ENCODE measurements at regions of chr18 and their contacts with region 1.

Region 1: DNA sequence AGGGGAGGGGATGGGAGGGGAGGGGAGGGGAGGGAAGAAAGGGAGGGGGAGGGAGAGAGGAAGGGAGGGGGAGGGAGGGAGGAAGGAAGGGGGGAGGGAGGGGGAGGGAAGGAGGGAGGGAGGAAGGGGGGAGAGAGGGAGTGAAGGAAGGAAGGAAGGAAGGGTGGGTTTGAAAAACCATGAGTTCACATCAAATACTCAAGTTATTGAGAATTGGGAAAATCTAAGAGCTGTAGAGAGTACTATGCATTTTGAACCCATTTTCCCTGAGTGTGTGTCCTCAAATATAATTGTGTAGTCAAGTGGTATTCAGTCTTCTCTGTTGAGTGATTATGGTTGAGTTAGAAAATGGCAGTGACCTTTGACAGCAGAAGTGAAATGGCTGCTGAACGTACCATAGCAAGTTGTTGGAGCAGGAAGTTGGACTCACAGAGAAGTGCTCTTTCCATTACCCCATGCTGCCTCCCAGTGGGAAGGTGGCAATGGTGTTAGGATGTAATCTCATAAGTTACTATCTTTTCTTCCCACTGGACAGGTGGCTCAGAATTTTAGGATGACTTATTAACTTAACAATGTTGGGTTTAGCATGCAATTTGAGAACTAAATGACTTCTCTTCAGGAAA is 214.6 kb downstream of the SETBP1 start:
- DNase-seq: peak; percentile 15
- H3K4me3 Mint-ChIP-seq: no peak overlapping the region
- H3K27ac Mint-ChIP-seq: peak overlapping the region; percentile 61
- H3K4me1 Mint-ChIP-seq: peaks cover 61% of the 10 kb centered on the region
- H3K27me3 Mint-ChIP-seq: peaks cover 4% of the 10 kb centered on the region

Region 2: DNA sequence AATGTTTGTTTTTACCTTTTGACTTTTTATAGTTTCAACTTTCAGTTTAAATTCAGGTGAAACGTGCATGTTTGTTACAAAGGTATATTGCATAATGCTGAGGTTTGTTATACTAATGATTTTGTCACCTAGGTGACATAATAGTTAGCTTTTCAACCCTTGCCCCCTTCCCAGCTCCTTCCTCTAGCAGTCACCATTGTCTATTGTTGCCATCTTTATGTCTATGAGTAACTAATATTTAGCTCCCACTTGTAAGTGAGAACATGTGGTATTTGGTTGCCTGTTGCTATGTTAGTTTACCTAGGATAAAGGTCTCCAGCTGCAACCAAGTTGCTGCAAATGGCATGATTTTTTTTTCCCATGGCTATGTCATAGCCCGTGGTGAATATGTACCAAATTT is 536.9 kb before region 1 on chr18:
- intact Hi-C with region 1: loop called (anchors 10 kb)
- DNase-seq: no peak
- H3K4me3 Mint-ChIP-seq: no peak overlapping the region
- H3K27ac Mint-ChIP-seq: no peak overlapping the region
- H3K4me1 Mint-ChIP-seq: no peaks in the 10 kb centered on the region
- H3K27me3 Mint-ChIP-seq: no peaks in the 10 kb centered on the region

Region 3: GRCh38 chr18:44579028-44579702 is 316.1 kb before region 1 on chr18:
- intact Hi-C with region 1: loop called (anchors 1 kb)
- DNase-seq: no peak
- H3K4me3 Mint-ChIP-seq: no peak overlapping the region
- H3K27ac Mint-ChIP-seq: no peak overlapping the region
- H3K4me1 Mint-ChIP-seq: no peaks in the 10 kb centered on the region
- H3K27me3 Mint-ChIP-seq: peaks cover 3% of the 10 kb centered on the region

Region 4: DNA sequence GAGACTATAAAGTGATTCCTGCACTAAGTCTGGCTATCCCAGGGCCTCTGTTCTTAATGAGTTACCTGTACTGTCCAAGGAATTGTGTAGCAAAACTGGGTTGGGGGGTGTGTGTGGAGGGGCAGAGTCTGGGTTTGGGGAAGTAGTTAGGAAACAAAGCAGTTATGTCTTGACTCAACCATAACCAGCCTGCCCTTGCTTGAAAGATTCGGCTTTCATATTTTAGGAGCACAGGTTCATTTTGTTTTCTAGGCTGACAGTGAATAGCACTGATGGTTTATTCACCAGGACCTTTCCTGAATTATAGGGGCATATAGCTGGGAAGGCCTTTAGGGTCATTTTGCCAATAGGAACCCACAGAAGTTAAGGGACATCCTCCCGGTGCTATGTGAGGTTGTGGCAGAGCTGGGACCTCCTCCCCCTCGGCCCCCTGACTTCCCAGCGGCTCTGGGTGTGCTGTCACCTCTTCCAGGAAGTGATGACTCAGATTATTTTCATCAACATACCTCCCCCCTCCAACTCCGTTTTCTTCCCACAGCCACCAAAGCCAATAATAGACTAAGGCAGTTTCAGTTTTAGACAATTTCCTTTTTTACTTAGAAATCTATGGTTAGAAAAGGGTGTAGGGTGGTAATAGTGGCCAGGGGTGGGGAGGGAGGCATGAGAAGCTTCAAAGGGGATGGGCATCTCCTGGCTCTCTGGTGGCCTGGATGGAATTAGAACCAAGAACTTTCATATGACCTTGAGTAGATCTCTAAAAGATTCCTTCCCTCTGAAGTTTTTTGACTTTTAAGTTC is 169.8 kb before region 1 on chr18:
- intact Hi-C with region 1: loop called (anchors 1 kb)
- DNase-seq: peak; percentile 72
- H3K4me3 Mint-ChIP-seq: peak overlapping the region; percentile 38
- H3K27ac Mint-ChIP-seq: peak overlapping the region; percentile 88
- H3K4me1 Mint-ChIP-seq: peaks cover 96% of the 10 kb centered on the region
- H3K27me3 Mint-ChIP-seq: no peaks in the 10 kb centered on the region

Region 5: DNA sequence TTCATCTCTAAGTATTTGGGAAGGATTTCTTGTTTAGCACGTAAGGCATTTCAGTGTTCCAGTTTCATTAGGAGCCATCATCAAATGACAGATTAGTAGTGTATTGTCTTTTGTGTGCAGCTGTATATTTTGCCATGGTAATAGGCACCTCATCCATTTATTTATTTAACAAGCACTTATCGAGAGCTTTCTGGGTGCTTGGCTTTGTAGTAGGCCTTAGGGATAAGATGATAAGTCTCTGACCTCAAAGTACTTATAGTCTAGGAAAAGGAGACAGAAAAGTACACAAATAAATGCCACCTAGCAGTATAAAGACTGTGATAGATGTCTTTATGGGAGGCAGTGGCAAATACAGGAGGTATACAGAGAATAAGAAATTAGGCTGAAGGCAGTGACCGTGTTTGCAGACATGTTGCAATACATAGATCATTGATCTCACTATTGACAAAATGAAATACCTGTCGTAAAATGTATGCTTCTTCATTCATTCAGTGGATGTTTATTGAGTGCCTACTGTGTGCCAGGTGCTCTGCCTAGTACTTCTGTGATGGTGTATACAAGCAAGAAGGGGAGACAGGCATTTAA is 51.3 kb after region 1 on chr18:
- intact Hi-C with region 1: no loop called
- DNase-seq: no peak
- H3K4me3 Mint-ChIP-seq: no peak overlapping the region
- H3K27ac Mint-ChIP-seq: no peak overlapping the region
- H3K4me1 Mint-ChIP-seq: no peaks in the 10 kb centered on the region
- H3K27me3 Mint-ChIP-seq: peaks cover 2% of the 10 kb centered on the region

Region 6: DNA sequence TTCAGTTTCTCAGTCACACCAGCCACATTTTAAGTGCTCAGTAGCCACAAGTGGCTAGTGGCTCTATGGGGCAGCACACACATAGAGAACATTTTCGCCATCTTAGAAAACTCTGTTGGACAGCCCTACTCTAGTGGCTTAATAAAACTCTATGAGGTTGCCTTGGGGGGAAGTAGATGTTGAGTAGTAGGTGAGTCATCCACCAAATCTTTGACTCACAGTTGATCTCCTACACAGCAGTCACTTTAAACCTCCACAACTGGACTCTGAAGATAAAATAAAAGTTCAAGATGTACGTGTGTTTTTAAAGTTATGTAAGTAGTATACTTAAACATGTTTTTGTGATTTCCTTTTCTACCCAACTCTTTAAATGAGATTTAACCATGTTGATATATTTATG is 164.4 kb after region 1 on chr18:
- intact Hi-C with region 1: no loop called
- DNase-seq: no peak
- H3K4me3 Mint-ChIP-seq: no peak overlapping the region
- H3K27ac Mint-ChIP-seq: no peak overlapping the region
- H3K4me1 Mint-ChIP-seq: no peaks in the 10 kb centered on the region
- H3K27me3 Mint-ChIP-seq: peaks cover 3% of the 10 kb centered on the region